ENCODE measurements at regions of chr18 and their contacts with region 1.

Region 1: GRCh38 chr18:35005963-35006577 is 35.1 kb upstream of the MAPRE2 start:
- DNase-seq: no peak
- ATAC-seq: peak; percentile 82 to 88

Region 2: GRCh38 chr18:35143622-35144596 is 137.8 kb after region 1 on chr18:
- intact Hi-C with region 1: loop called in 1 of 2 experiments (anchors 1 kb)
- DNase-seq: peak; percentile 57
- ATAC-seq: peak; percentile 93 to 96

Region 3: GRCh38 chr18:35171315-35171987 is 165.4 kb after region 1 on chr18:
- intact Hi-C with region 1: no loop called
- DNase-seq: no peak
- ATAC-seq: no peak

Region 4: DNA sequence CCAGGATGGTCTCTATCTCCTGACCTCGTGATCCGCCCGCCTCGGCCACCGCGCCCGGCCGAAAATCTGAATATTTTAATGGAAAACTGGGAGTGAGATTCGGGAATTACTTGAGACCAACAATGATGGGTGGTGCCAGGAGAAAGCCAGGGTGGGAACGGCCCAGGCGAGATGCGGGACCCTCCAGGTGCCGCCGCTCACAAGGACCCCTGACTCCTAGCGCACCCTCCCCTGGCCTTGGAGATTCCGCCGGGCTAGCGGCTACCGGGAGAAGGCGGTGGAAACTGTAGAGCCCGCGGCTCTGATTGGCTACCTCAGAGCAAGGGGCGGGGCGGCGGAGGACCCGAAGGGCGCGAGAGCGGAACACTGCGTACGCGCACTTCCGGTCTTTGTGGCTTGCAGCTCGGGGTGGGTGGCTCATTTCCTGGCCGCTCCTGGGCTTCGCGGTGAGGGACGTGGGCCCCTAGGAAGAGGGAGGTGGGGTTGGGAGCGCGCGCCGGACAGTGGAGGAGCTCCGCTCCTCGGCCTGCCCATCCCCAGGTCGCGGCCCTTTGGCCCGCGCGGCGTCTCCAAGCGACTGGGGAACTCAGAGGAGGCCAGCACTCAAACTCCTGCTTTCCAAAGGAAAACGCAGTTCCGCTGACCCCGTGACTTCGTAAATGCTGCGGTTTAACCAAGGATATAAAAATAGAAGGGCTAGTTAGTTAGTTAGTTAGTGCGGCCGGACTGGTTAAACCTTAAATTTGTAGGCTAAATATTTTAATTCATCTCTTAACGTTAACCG is 234.8 kb after region 1 on chr18 and contains the start of gene ZNF397:
- intact Hi-C with region 1: loop called in 1 of 2 experiments (anchors 5 kb)
- DNase-seq: peak; percentile 99
- ATAC-seq: peak; percentile 100
- total RNA-seq, gene ZNF397: 16.1 to 17.9 TPM

Region 5: DNA sequence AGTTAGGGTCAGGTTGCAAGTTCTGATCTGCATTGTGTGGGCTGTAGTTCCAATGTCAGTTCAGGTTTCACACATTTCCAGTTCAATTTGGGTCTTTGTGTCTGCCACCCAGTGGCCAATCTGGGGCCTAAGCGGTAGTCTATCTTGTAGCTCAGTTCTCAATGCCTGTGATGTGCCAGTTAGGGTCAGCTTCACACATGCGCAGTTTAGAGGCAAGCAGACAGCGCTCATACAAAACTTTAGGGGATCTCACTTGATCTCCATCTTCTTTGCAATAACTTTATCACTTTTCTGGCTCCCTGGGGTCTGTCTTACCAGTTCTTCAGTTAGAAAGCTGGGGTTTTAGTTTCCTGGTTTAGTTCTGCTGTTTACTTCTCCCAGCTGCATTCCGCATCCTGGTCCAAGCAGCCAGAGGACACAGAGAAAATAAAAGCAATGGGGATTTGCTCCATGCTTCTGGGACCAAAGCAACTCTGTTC is 349.1 kb after region 1 on chr18:
- intact Hi-C with region 1: loop called (anchors 5 to 10 kb)
- DNase-seq: peak; percentile 78
- ATAC-seq: peak; percentile 99

Region 6: DNA sequence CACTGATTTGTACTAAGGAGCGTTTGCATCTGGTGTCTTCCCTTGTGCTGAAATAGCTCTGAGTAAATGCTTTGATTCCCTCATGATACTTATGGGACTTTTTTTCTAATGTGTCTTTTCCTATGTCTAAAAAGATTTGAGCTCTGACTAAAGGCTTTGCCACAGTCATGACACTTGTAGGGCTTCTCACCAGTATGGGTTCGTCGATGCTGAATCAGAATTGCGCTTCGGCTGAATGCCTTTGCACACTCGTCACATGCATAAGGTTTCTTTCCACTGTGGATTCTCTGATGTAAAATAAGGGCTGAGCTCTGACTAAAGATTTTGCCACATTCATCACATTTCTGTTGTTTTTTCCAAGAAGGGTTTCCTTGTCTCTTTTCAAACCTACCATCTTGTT is 363.1 kb after region 1 on chr18:
- intact Hi-C with region 1: loop called in 1 of 2 experiments (anchors 10 kb)
- DNase-seq: no peak
- ATAC-seq: no peak